Ovary (tissue), 10 donors: ENCODE measurements at regions of chr20 and their contacts with region 1.

Region 1: DNA sequence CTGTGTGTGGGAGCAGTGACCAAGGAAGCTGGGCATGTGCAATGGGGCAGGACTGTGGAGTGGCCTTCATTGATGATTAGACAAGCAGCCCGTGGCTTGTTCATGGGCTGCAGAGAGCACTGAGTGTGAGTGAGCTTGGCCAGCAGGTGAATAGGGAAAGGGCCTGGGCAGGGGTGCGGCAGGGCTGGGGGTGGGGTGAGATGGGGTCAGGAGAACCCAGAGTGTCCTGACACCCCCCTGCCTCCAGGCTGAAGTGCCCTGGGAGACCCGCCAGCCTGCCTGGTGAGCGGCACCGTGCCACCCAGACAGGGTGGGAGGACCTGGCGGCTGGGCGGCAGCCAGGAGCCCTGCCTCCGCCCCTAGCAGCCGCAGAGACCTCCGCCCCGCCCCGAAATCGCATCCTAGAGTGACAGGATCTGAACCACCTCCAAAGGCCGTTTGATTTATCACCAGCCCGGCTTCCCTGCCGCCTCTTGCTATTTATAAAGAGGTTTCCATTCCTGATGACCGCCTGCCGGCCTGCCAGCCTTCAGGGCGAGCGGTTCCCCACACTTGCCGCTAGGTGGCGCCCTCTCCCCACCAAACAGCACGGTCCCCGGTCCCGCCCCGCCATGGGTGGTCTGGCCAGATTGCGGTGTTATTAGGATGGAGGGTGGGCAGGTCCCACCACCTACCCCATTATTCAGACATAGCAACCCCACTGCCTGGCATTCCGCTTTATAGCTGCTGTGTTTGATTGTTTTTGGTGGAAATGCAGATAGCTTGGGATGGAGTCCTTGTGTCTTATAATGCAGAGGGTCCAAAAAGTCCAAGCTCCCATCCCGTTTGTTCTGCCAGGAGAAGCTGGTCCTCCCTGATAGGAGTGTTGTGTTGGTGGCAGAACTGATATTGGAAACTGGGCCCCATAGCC is 3.5 kb downstream of the MYLK2 start:
- DNase-seq: peak; percentile 69 to 86 (median 83)
- H3K4me3 ChIP-seq: no peak overlapping the region
- H3K27ac ChIP-seq: no peak overlapping the region
- H3K4me1 ChIP-seq: no peaks in the 10 kb centered on the region
- H3K27me3 ChIP-seq: no peaks in the 10 kb centered on the region
- CTCF ChIP-seq: peak; percentile 93 to 96 (median 94)
- EP300 ChIP-seq: no peak
- POLR2A ChIP-seq: no peak

Region 2: DNA sequence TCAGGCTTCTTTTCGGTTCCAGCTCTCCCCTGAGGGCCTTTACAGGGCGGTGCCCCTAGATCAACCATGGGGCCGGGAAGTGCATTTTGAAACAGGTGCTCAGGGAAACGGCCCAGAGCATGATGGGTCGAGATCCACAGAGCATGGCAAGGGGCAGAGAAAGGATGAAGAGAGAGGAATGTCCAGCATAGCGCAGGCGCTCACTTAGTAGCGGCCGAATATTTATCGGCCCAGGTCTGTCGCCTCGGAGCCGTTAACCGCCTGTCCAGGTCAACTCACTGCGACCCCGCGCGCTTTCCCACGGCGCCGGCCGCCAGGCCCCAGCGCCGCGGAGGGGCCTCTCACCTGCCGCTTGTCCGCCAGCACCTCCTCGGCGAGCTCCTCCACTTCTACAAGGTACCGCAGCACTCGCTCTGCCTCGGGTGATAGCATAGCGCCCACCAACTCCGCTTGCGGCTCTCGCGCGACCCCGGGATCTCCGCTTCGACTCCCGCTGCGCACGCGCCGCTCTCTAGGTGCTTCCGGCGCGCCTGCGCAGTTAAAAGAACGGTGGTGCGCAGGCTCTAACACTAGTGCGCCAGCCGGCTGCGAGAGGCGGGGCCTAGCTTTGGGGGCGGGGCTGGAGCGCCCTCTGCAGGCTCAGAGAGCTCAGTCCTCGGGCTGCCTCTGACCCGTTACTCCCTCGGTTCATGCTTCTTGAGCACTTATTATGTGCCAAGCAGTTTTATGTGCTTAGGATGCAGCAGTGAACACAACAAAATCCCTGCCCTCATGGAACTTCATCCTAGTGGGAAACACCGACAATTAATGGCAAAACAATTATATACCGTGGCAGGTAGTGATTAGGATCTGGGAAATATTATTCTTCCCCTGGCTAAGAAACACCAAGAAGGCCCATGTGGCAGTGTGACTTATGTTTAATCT is 129.1 kb after region 1 on chr20 and contains the start of gene PDRG1:
- intact Hi-C with region 1: loop called in 3 of 4 experiments (anchors 2 to 5 kb)
- DNase-seq: peak; percentile 93 to 98 (median 96)
- H3K4me3 ChIP-seq: peak within 1 kb of the TSS; percentile 64
- H3K27ac ChIP-seq: peak within 1 kb of the TSS in 1 of 2 donors; percentile 14
- H3K4me1 ChIP-seq: peaks cover 8% of the 10 kb centered on the region
- H3K27me3 ChIP-seq: no peaks in the 10 kb centered on the region
- CTCF ChIP-seq: peak; percentile 86 to 94 (median 88)
- EP300 ChIP-seq: no peak
- POLR2A ChIP-seq: peak; percentile 36
- total RNA-seq, gene PDRG1: 6.4 to 12.1 (median 9.4) TPM

Region 3: GRCh38 chr20:32031007-32031958 is 208.6 kb after region 1 on chr20:
- intact Hi-C with region 1: loop called (anchors 2 to 5 kb)
- DNase-seq: peak; percentile 56 to 77 (median 67)
- H3K4me3 ChIP-seq: no peak overlapping the region
- H3K27ac ChIP-seq: no peak overlapping the region
- H3K4me1 ChIP-seq: peaks cover 3% of the 10 kb centered on the region
- H3K27me3 ChIP-seq: no peaks in the 10 kb centered on the region
- CTCF ChIP-seq: peak; percentile 48 to 66 (median 62)
- EP300 ChIP-seq: no peak
- POLR2A ChIP-seq: no peak